Mammary epithelial cell (primary cell): ENCODE measurements at regions of chr14 and their contacts with region 1.

Region 1: DNA sequence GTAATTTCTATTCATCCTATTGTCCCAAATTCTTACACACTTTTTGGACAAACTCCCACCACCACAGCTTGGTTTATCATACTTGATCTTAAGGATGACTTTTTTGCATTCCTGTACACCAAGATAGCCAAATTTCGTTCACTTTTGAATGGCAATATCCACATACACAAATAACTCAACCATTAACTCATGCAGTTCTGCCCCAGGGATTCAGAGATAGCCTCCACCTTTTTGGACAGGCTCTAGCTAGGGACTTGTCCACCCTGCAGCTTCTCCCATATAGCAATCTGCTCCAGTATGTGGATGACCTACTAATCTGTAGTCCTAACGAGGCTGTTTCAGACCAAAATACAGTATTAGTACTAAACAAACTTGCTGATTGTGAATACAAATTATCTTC is 32.7 kb upstream of the OXA1L start:
- DNase-seq: no peak
- H3K4me3 ChIP-seq: no peak overlapping the region
- H3K27ac ChIP-seq: no peak overlapping the region
- H3K4me1 ChIP-seq: no peaks in the 10 kb centered on the region
- H3K27me3 ChIP-seq: no peaks in the 10 kb centered on the region
- CTCF ChIP-seq: no peak

Region 2: DNA sequence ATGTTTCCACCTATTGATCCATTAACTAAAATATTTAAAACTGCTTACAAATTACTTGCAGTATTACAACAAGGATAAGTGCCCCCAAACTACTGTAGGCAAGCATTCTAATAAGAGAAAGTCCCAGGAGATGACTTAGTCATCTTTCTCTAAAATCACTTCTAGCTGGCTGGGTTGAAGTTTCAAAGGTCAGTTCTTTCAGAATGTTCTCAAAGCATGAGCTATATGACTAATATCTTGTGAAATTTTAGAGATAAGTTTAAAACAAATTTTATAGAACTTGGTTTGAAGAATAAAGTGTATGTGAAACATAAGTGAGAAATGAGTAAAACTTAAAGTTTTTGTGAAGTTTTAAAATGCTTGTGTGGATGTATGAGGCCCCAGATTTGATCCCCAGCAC is 65.4 kb before region 1 on chr14:
- CTCF ChIA-PET with region 1: no interaction called
- dilution Hi-C with region 1: loop called (anchors 5 kb)
- in situ Hi-C with region 1: no loop called
- intact Hi-C with region 1: no loop called
- DNase-seq: no peak
- H3K4me3 ChIP-seq: no peak overlapping the region
- H3K27ac ChIP-seq: no peak overlapping the region
- H3K4me1 ChIP-seq: no peaks in the 10 kb centered on the region
- H3K27me3 ChIP-seq: no peaks in the 10 kb centered on the region
- CTCF ChIP-seq: no peak

Region 3: GRCh38 chr14:22689186-22689585 is 44.6 kb before region 1 on chr14:
- CTCF ChIA-PET with region 1: no interaction called
- dilution Hi-C with region 1: loop called (anchors 5 kb)
- in situ Hi-C with region 1: no loop called
- intact Hi-C with region 1: no loop called
- DNase-seq: peak; percentile 96
- H3K4me3 ChIP-seq: no peak overlapping the region
- H3K27ac ChIP-seq: no peak overlapping the region
- H3K4me1 ChIP-seq: peaks cover 16% of the 10 kb centered on the region
- H3K27me3 ChIP-seq: no peaks in the 10 kb centered on the region
- CTCF ChIP-seq: no peak

Region 4: GRCh38 chr14:22836301-22837113 is 102.7 kb after region 1 on chr14 and contains the start of gene MMP14:
- CTCF ChIA-PET with region 1: no interaction called
- dilution Hi-C with region 1: no loop called
- in situ Hi-C with region 1: no loop called
- intact Hi-C with region 1: no loop called
- DNase-seq: peak; percentile 86
- H3K4me3 ChIP-seq: peak within 1 kb of the TSS; percentile 84 to 94 (median 86)
- H3K27ac ChIP-seq: peak within 1 kb of the TSS; percentile 86
- H3K4me1 ChIP-seq: peaks cover 24% of the 10 kb centered on the region
- H3K27me3 ChIP-seq: no peaks in the 10 kb centered on the region
- CTCF ChIP-seq: peak in 1 of 2 donors; percentile 57
- total RNA-seq, gene MMP14: 525 to 766 TPM

Region 5: GRCh38 chr14:22886500-22887259 is 152.9 kb after region 1 on chr14:
- CTCF ChIA-PET with region 1: no interaction called
- dilution Hi-C with region 1: loop called (anchors 5 kb)
- in situ Hi-C with region 1: no loop called
- intact Hi-C with region 1: no loop called
- DNase-seq: peak; percentile 56
- H3K4me3 ChIP-seq: peak overlapping the region; percentile 49 to 61 (median 50)
- H3K27ac ChIP-seq: peak overlapping the region; percentile 58
- H3K4me1 ChIP-seq: peaks cover 35% of the 10 kb centered on the region
- H3K27me3 ChIP-seq: no peaks in the 10 kb centered on the region
- CTCF ChIP-seq: peak in 1 of 2 donors; percentile 25